Pancreas (tissue), 10 donors: ENCODE measurements at regions of chr9 and their contacts with region 1.

Region 1: DNA sequence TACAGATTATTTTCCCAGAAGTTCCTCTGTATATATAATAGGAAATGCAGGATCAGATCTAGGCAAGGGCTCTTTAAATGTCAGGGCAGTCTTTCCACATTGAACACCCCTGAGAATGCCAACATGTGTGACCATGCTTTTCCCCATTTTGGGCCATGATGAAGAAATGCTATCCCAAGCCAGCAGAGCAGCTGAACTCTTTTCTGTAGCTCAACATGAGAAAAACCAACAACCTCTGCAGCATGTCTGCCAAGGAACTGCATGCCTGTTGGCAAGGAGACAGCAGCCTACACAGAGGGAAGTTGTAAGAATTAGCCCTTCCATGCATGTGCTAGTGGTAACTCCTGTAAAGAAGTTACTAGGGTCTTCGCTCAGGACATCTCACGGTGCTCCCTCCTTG is 9.5 kb upstream of the IFNK start:
- DNase-seq: peak in 5 of 6 donors; percentile 36 to 81 (median 67)
- ATAC-seq: peak; percentile 68 to 96 (median 92)
- H3K4me3 ChIP-seq: no peak overlapping the region
- H3K27ac ChIP-seq: peak overlapping the region in 1 of 4 donors; percentile 13
- H3K4me1 ChIP-seq: no peaks in the 10 kb centered on the region
- H3K27me3 ChIP-seq: no peaks in the 10 kb centered on the region
- CTCF ChIP-seq: no peak

Region 2: DNA sequence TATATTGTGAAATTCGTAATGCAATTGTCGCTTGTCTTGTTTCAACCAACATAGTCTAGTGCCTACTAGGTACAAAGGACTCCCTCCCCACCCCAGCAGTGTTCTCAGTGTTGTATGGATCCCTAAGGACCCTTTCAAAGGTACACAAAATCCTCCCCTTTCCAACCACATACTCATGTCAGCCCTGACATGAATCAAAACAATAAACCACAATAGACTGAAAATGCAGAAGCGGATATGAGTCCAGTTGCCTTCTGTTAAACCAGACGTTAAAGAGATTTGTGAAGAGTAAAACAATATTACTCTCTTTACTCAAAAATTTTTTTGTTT is 72.8 kb before region 1 on chr9:
- intact Hi-C with region 1: loop called in 1 of 3 experiments (anchors 10 kb)
- DNase-seq: no peak
- ATAC-seq: no peak
- H3K4me3 ChIP-seq: no peak overlapping the region
- H3K27ac ChIP-seq: no peak overlapping the region
- H3K4me1 ChIP-seq: peaks cover 6 to 8% (median 8%) of the 10 kb centered on the region in 3 donors
- H3K27me3 ChIP-seq: no peaks in the 10 kb centered on the region
- CTCF ChIP-seq: no peak